CD4-positive, alpha-beta memory T cell (primary cell): ENCODE measurements at regions of chr1 and their contacts with region 1.

Region 1: GRCh38 chr1:29033829-29034466 is 89.8 kb downstream of the TMEM200B start:
- DNase-seq: peak in 4 of 5 donors; percentile 34 to 48 (median 42)
- H3K4me3 ChIP-seq: no peak overlapping the region
- H3K4me3 Mint-ChIP-seq: no peak overlapping the region
- H3K27ac ChIP-seq: no peak overlapping the region
- H3K27ac Mint-ChIP-seq: peak overlapping the region in 1 of 7 donors; percentile 92
- H3K4me1 ChIP-seq: no peaks in the 10 kb centered on the region
- H3K4me1 Mint-ChIP-seq: peaks cover 0 to 4% (median 0%) of the 10 kb centered on the region in 4 donors
- H3K27me3 ChIP-seq: no peaks in the 10 kb centered on the region
- H3K27me3 Mint-ChIP-seq: no peaks in the 10 kb centered on the region

Region 2: DNA sequence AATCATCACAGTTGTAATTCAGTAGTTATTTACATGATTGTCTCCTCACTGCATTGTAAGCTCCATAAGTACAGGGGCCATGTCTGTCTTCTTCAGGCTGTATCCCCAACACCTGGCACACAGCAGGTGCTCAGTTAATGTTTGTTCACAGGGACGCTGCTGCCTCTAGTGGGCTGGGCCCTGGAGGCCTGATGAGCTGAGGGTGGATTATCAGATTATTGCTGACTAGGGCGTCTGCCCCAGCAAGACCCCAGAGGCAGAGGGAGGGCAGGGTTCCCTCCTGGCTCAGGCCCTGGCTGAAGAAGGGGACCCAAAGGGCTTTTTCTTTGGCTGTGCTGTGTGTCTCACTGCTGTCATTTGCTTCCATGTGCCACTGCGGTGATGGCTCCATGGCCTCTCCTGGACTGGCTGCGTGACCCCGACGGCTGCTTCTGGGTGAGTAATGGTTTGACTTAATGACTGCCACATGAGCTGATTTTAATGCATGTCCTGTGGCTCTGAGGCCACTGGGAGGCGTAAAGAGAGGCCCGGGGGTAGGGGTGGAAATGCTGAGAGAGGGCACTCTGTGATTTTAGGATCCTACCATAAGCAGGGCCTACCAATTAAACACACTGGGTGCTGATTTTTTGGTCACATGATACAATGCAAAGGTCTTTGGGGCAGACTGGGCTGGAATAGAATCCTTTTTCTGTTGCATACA is 140.4 kb before region 1 on chr1:
- CTCF ChIA-PET with region 1: interaction called, 12 read pairs
- POLR2A ChIA-PET with region 1: no interaction called
- intact Hi-C with region 1: no loop called
- DNase-seq: peak in 4 of 5 donors; percentile 26 to 33 (median 30)
- H3K4me3 ChIP-seq: no peak overlapping the region
- H3K4me3 Mint-ChIP-seq: peak overlapping the region in 1 of 8 donors; percentile 35
- H3K27ac ChIP-seq: no peak overlapping the region
- H3K27ac Mint-ChIP-seq: peak overlapping the region in 2 of 7 donors; percentile 30 to 72
- H3K4me1 ChIP-seq: peaks cover 40% of the 10 kb centered on the region
- H3K4me1 Mint-ChIP-seq: peaks cover 38 to 62% (median 46%) of the 10 kb centered on the region in 4 donors
- H3K27me3 ChIP-seq: no peaks in the 10 kb centered on the region
- H3K27me3 Mint-ChIP-seq: no peaks in the 10 kb centered on the region

Region 3: DNA sequence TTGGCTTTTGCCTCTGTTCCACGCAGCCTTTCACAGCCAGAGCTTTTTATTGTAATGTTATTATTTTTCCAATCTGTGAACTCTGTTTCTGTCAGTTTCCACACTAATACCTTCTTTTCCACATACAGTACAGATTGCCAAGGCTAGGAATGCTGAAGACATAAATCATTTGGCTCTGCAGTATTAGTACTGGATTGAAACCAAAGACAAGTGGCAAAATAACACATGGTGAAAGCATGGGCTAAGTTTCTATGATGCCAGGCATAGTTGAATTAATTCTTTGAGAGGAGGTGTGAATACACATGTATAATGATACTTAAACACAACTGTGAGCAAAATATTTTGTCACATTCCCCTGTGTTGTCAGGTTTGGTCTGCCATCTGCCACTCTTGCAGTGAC is 16.2 kb after region 1 on chr1:
- CTCF ChIA-PET with region 1: interaction called, 10 read pairs
- POLR2A ChIA-PET with region 1: interaction called, 3 read pairs
- intact Hi-C with region 1: no loop called
- DNase-seq: no peak
- H3K4me3 ChIP-seq: no peak overlapping the region
- H3K4me3 Mint-ChIP-seq: no peak overlapping the region
- H3K27ac ChIP-seq: no peak overlapping the region
- H3K27ac Mint-ChIP-seq: peak overlapping the region in 1 of 7 donors; percentile 19
- H3K4me1 ChIP-seq: no peaks in the 10 kb centered on the region
- H3K4me1 Mint-ChIP-seq: peaks cover 0 to 2% (median 0%) of the 10 kb centered on the region in 4 donors
- H3K27me3 ChIP-seq: no peaks in the 10 kb centered on the region
- H3K27me3 Mint-ChIP-seq: no peaks in the 10 kb centered on the region

Region 4: DNA sequence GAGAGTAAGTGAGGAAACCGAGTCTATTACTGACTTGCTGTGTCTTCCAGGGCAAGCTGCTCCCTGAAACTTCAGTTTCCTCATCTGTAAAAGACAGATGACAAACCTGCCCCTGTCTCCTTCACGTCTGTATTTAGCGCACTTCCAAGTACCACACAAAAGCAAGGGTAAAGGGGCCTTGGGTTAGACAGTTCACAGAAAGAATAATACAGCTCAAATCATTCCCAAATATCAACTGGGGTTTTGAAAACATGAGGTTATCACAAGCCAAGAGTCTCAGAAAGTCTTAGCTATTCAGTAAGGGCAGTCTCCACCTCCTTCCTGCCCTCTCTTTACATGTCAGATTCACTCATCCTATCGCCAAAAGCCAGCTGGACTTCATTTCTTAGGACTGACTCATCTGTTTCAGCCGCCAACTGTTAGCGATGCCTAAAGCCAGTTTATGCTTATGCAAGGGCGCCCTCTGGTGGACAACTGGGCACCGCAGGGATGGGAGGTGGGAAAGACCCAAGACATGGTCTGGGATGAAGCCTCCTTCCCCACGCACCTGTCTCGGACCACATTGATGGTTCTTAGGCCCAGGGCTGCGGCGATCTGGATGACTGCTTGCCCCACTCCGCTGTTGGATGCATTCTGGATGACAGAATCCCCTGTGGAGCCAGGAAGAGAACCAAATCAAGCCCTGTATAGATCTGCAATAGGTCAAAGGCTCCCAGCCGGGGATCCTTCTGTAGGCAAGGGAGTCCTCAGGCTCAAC is 168.8 kb after region 1 on chr1:
- CTCF ChIA-PET with region 1: interaction called, 27 read pairs
- POLR2A ChIA-PET with region 1: no interaction called
- intact Hi-C with region 1: loop called (anchors 2 kb)
- DNase-seq: peak; percentile 73 to 81 (median 76)
- H3K4me3 ChIP-seq: no peak overlapping the region
- H3K4me3 Mint-ChIP-seq: no peak overlapping the region
- H3K27ac ChIP-seq: no peak overlapping the region
- H3K27ac Mint-ChIP-seq: peak overlapping the region in 2 of 7 donors; percentile 12 to 24
- H3K4me1 ChIP-seq: no peaks in the 10 kb centered on the region
- H3K4me1 Mint-ChIP-seq: peaks cover 0 to 7% (median 2%) of the 10 kb centered on the region in 4 donors
- H3K27me3 ChIP-seq: no peaks in the 10 kb centered on the region
- H3K27me3 Mint-ChIP-seq: no peaks in the 10 kb centered on the region